Lower leg skin (tissue), 4 donors: ENCODE measurements at regions of chr17 and their contacts with region 1.

Region 1: DNA sequence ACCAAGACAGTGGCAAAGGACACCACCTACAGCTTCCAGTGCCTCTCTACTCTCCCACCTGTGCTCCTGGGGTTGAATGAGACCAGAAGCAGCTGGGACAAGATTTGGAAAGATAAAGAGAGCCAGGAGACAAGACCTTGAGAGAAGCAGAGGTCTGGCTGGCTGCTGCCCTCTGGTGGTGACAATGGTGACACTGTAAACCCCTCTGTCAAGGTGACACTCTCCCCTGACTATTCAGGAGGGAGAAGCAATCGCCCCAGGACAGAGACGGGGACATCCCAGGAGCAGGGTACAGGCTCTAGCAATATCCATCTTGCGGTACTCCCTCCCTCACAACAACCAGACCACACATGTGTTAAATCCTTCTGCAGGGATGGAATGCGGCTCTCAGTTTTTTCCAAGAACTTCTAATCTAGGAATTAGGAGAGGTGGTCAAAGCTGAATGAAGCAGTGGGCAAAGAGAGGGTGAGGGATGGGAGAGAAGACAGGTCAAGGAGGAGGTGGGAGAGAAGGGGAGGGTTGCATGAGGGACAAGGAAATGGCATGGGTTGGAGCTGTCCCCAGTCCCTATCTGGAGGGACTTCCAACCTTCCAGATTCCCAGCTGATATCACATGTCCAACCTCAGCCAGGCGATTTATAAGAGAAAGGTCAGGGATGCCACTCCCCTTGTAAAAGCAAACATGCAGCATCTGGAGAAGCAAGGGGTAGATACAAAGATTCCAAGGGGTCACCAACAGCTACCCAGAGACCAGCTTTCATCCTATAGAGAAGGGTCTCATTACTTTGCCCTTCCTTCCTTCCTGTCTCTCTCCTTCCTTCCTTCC is 2.9 kb downstream of the PHOSPHO1 start:
- DNase-seq: peak; percentile 71 to 95
- H3K4me3 ChIP-seq: no peak overlapping the region
- CTCF ChIP-seq: peak in 1 of 3 donors; percentile 31
- POLR2A ChIP-seq: no peak

Region 2: GRCh38 chr17:49180303-49180702 is 47.3 kb before region 1 on chr17:
- intact Hi-C with region 1: loop called (anchors 5 kb)
- DNase-seq: peak; percentile 49 to 93
- H3K4me3 ChIP-seq: no peak overlapping the region
- CTCF ChIP-seq: peak in 1 of 3 donors; percentile 68
- POLR2A ChIP-seq: no peak